ENCODE measurements at regions of chr12 and their contacts with region 1.

Region 1: DNA sequence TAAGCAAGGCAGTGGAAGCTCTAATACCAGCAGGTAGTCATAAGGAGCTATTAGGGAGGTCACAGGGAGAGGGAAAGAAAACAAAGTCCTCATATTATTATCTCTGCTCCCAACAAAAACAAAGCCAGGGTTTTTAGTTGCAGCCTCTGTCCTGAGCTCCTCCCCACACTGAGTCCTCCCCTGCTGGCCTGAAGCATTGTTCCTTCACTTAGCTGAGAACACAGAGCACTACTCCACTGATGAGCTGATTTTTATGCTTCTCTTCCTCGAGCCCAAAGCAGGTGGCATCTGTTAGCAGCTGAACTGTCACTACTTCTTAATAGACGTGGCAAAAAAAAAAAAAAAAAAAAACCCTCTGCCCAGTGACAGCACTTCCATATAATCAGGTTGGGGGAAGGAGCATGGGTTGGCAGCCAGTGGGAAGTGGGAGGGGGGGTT is 10.5 kb upstream of the STAC3 start:
- DNase-seq: no peak
- H3K4me3 ChIP-seq: no peak overlapping the region
- H3K27ac ChIP-seq: no peak overlapping the region
- H3K4me1 ChIP-seq: peaks cover 0 to 7% (median 3%) of the 10 kb centered on the region in 4 experiments; a peak in 5 of 7 replicates
- H3K27me3 ChIP-seq: no peaks in the 10 kb centered on the region
- CTCF ChIP-seq: no peak
- EP300 ChIP-seq: no peak
- POLR2A ChIP-seq: no peak
- RAD21 ChIP-seq: no peak

Region 2: DNA sequence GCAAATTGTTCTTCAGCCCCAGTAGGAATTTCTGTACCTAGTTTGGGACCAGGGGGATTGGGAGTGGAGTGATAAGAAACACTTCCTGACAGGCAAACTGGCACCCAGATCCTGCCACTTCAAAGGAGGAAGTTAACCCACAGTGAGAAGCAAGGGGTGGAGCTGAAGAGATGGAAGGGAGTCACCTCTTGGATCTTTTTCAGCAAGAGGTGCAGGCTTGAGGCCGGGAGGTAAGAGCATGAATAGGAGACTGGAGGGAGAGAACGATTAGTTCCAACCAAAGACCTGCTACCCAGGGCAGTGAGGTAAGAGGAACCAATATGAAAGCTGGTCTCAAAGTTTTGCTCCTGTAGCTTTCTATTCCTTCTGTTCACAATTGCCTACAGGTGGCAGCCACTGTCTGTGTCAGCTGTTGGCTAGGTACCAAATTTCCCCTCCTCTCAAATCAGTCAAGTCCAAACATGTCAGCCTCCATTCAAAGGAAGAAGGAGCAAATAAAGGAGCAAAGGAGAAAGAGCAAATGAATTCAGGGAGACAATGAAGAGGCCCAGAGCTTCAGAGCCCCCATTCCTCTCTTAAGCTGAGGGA is 230.2 kb before region 1 on chr12:
- CTCF ChIA-PET with region 1: no interaction called
- POLR2A ChIA-PET with region 1: no interaction called
- DNase-seq: no peak
- H3K4me3 ChIP-seq: no peak overlapping the region
- H3K27ac ChIP-seq: no peak overlapping the region
- H3K4me1 ChIP-seq: peaks cover 0 to 8% (median 3%) of the 10 kb centered on the region in 4 experiments; a peak in 5 of 7 replicates
- H3K27me3 ChIP-seq: peaks cover 0 to 3% (median 0%) of the 10 kb centered on the region in 4 experiments; a peak in 1 of 7 replicates
- CTCF ChIP-seq: peak in 2 of 3 experiments; percentile 12 to 46; a peak in 3 of 4 replicates
- EP300 ChIP-seq: no peak
- POLR2A ChIP-seq: no peak
- RAD21 ChIP-seq: peak; percentile 42 to 58

Region 3: GRCh38 chr12:57046947-57047890 is 214.2 kb before region 1 on chr12:
- CTCF ChIA-PET with region 1: no interaction called
- POLR2A ChIA-PET with region 1: no interaction called
- DNase-seq: no peak
- H3K4me3 ChIP-seq: no peak overlapping the region
- H3K27ac ChIP-seq: no peak overlapping the region
- H3K4me1 ChIP-seq: no peaks in the 10 kb centered on the region
- H3K27me3 ChIP-seq: no peaks in the 10 kb centered on the region
- CTCF ChIP-seq: no peak
- EP300 ChIP-seq: no peak
- POLR2A ChIP-seq: no peak
- RAD21 ChIP-seq: no peak

Region 4: DNA sequence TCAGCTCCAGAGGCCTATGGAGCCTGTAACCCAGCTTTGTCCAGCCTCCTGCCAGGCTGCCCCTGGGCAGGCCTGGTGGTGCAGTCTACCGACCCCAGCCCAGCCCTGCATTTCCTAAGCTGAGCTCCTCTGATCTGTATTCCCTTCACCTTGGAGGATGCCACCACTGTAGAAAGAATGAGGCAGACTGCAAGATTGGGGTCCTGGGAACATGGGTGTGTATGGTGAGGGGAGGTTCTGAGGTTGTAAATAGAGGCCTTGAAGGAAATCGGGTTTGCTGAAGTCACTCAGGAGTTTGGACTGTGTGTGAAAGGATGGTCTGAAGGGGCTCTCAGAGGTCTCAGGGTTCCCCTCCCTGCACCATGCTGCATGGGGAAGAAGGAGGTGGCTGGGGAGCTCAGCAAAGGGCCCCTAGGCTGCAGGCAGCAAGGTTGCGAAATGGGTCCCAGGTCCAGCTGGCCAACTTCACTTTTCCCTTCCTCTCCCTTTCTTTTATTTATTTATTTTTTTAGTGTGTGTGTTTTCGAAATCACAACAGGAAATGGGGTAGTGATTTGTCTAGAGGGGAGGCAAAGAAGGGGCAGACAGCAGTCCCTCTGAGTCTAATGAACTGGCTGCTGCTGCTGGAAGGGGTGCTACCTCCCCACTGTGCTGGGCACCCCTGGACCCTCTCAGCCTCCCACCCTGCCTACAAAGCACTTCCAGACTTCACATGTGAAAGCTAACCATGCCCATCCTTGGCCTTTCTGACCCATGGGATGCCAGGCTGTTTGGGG is 112.8 kb before region 1 on chr12:
- CTCF ChIA-PET with region 1: no interaction called
- POLR2A ChIA-PET with region 1: no interaction called
- DNase-seq: no peak
- H3K4me3 ChIP-seq: no peak overlapping the region
- H3K27ac ChIP-seq: no peak overlapping the region
- H3K4me1 ChIP-seq: peaks cover 0 to 6% (median 2%) of the 10 kb centered on the region in 4 experiments; a peak in 4 of 7 replicates
- H3K27me3 ChIP-seq: no peaks in the 10 kb centered on the region
- CTCF ChIP-seq: no peak
- EP300 ChIP-seq: no peak
- POLR2A ChIP-seq: no peak
- RAD21 ChIP-seq: no peak

Region 5: DNA sequence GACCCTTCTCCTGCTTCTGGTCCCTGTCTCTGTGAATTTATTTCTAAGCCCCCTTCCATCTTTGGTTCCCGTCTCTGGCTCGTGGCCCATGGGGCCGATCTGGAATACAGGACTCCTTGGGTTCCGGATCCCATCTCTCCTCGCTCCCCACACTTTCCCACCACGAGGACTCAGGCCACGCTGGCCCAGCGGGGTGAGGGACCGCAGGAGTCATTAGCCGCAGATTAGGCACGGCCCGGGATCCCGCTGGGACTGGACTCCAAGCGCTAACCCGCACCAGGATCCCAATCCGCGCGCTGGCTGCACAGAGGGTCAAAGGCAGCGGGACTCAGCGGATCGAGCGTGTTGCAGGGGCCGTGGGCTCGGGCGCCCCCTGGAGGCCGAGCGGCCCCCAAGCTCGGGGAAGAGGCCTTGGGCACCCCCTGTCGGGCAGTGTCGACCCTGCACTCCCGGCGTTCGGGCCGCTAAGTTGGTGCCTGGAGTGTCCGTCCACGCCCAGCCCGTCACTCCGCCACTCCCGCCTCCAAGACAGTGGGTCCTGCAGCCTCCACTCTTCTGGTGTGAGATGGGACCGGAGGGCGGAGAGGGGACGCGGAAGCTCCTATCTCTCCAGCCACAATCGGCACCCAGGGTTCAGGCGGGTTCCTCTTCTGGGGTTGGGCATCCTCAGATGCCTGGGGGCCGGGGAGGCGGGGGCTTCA is 22.4 kb before region 1 on chr12:
- CTCF ChIA-PET with region 1: interaction called, 14 read pairs
- POLR2A ChIA-PET with region 1: interaction called, 4 read pairs
- DNase-seq: peak in 1 of 2 experiments; percentile 98
- H3K4me3 ChIP-seq: peak overlapping the region; percentile 42 to 67 (median 54)
- H3K27ac ChIP-seq: no peak overlapping the region
- H3K4me1 ChIP-seq: peaks cover 6 to 68% (median 45%) of the 10 kb centered on the region in 4 experiments
- H3K27me3 ChIP-seq: peaks cover 59 to 80% (median 74%) of the 10 kb centered on the region in 4 experiments
- CTCF ChIP-seq: peak in 2 of 3 experiments; percentile 100; a peak in 3 of 4 replicates
- EP300 ChIP-seq: peak in 1 of 2 experiments; percentile 59; a peak in 1 of 3 replicates
- POLR2A ChIP-seq: peak in 1 of 2 experiments; percentile 24; a peak in 1 of 3 replicates
- RAD21 ChIP-seq: peak; percentile 85 to 91

Region 6: GRCh38 chr12:57248934-57249742 is 12.3 kb before region 1 on chr12:
- CTCF ChIA-PET with region 1: interaction called, 74 read pairs
- POLR2A ChIA-PET with region 1: interaction called, 3 read pairs
- DNase-seq: no peak
- H3K4me3 ChIP-seq: no peak overlapping the region
- H3K27ac ChIP-seq: no peak overlapping the region
- H3K4me1 ChIP-seq: peaks cover 2 to 10% (median 6%) of the 10 kb centered on the region in 4 experiments
- H3K27me3 ChIP-seq: peaks cover 0 to 7% (median 6%) of the 10 kb centered on the region in 4 experiments; a peak in 4 of 7 replicates
- CTCF ChIP-seq: no peak; a peak in 1 of 4 replicates
- EP300 ChIP-seq: no peak
- POLR2A ChIP-seq: no peak
- RAD21 ChIP-seq: no peak

Region 7: DNA sequence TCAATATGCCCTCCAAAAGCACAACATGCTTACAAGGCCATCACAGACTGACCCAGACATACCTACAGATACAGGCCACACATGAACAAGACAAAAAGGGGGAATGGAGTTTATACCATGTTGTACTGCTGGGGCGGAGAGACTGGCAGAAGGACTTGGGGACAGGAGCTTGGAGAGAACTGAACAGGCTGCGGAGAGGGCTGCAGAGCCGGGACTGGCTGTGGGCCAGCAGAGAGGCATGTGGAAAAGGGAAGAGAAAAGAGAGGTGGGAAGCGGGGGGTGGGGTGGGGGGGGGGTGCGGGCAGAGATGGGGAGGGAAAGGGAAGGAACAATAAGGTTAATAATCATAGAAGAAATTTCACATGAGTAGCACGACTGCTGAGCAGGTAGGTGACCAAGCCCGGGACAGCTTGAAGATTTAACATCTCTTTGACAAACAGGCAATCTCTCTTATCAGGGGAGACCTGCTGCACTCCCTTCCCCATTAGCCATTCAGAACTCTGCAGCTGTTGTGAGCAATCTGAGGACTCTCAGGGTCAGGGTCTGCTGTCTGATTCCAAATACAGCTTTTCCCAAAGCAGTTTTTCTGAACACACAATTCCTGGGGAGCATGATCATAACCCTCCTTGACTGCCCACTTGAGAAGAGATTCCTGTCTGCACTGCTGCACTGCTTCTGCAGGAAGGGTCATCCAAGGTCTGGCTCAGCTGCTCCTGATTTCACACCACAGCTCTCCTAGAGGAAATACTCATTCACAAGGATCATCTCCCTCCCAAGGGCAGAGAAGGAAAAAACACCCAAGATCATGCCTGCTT is 11.1 kb after region 1 on chr12:
- CTCF ChIA-PET with region 1: interaction called, 36 read pairs
- POLR2A ChIA-PET with region 1: interaction called, 8 read pairs
- DNase-seq: no peak
- H3K4me3 ChIP-seq: no peak overlapping the region
- H3K27ac ChIP-seq: no peak overlapping the region
- H3K4me1 ChIP-seq: no peaks in the 10 kb centered on the region; a peak in 1 of 7 replicates
- H3K27me3 ChIP-seq: no peaks in the 10 kb centered on the region
- CTCF ChIP-seq: no peak
- EP300 ChIP-seq: no peak
- POLR2A ChIP-seq: no peak
- RAD21 ChIP-seq: no peak

Region 8: DNA sequence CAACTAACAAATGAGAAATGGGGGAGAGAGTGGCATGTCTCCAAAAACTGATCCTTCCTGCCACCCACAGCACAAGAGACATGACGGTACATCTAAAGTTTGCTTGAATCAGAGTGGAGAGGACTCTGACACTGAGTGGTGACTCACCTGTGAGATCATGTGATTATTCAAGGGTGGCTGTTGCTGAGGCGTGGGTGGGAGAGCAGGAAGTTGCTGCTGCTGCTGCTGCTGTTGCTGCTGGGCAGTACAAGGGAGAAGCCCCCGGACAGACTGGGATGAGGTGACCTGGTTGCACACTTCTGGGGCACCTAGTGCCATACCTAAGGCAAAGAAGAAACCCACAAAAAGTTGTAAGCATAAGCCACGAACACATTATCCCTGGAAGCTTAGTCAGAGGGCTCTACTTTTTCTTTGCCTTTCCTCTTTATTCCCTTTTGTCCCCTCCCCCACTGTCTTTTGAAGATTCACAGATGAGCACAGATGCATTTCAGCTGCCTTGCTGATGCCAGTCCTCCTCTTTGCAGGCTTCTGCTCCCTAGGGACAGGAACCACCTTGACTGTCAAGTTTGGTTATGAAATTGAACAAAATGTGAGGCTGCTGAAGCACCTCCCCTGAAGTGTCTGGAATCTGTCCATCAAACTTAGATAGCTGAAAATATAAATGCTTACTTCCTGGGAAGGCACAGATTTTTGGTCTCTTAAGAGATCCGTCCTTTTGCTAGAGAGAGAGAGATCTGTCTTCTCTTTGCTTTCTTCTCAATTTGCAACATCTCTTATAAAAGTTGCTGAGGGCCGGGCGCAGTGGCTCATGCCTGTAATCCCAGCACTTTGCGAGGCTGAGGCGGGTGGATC is 19.0 kb after region 1 on chr12:
- CTCF ChIA-PET with region 1: interaction called, 36 read pairs
- POLR2A ChIA-PET with region 1: interaction called, 3 read pairs
- DNase-seq: no peak
- H3K4me3 ChIP-seq: no peak overlapping the region
- H3K27ac ChIP-seq: no peak overlapping the region
- H3K4me1 ChIP-seq: 0 out of 7 replicates have a peak, but pooled peaks cover 0 to 2% (median 0%) of the 10 kb centered on the region in 4 experiments
- H3K27me3 ChIP-seq: no peaks in the 10 kb centered on the region
- CTCF ChIP-seq: no peak
- EP300 ChIP-seq: no peak
- POLR2A ChIP-seq: no peak
- RAD21 ChIP-seq: no peak

Region 9: GRCh38 chr12:57355734-57356133 is 94.3 kb after region 1 on chr12:
- CTCF ChIA-PET with region 1: no interaction called
- POLR2A ChIA-PET with region 1: no interaction called
- DNase-seq: no peak
- H3K4me3 ChIP-seq: no peak overlapping the region
- H3K27ac ChIP-seq: no peak overlapping the region
- H3K4me1 ChIP-seq: no peaks in the 10 kb centered on the region
- H3K27me3 ChIP-seq: no peaks in the 10 kb centered on the region
- CTCF ChIP-seq: no peak
- EP300 ChIP-seq: no peak
- POLR2A ChIP-seq: no peak
- RAD21 ChIP-seq: no peak

Measured in H1 (cell line).